ENCODE measurements at regions of chr9 and their contacts with region 1.

Region 1: GRCh38 chr9:91193658-91194391 is 167.9 kb downstream of the AUH start:
- H3K4me3 Mint-ChIP-seq: peak overlapping the region; percentile 71
- H3K27ac Mint-ChIP-seq: peak overlapping the region; percentile 100
- H3K4me1 Mint-ChIP-seq: peaks cover 82% of the 10 kb centered on the region
- H3K27me3 Mint-ChIP-seq: no peaks in the 10 kb centered on the region

Region 2: DNA sequence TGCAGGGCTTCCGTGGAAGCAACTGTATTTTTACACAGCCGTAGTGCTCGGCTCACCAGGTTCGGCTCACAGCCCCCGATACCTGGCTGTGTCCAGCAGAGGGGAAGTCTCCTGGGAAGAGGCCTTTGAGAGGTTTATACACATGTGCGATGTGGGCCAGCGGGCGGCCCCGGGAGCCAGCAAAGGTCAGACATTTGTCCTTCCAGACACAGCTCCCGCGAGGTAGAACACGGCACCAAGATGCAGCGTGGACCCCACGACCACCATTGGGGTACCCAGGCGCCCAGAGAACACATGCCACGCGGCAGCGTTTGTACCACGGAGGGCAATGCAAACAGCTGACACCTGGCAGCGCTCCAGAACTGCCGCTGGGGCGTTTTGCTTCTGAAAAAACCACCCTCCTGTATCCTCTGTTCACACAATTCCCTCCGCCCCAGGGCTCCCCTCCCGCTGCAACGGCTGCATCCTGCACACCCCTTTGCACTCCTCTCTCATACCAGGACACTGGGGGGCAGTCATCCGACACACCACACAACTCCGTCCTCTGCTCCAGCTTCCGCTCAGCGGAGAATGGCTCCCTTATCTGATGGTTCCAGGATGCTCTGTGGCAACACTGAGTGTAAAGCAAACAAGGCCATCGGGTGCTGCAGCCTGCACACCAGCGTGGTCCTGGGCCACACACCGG is 156.9 kb before region 1 on chr9:
- intact Hi-C with region 1: loop called (anchors 5 kb)
- H3K4me3 Mint-ChIP-seq: peak overlapping the region; percentile 46
- H3K27ac Mint-ChIP-seq: peak overlapping the region; percentile 52
- H3K4me1 Mint-ChIP-seq: peaks cover 53% of the 10 kb centered on the region
- H3K27me3 Mint-ChIP-seq: peaks cover 23% of the 10 kb centered on the region

Region 3: GRCh38 chr9:91150998-91151717 is 42.7 kb before region 1 on chr9:
- intact Hi-C with region 1: loop called (anchors 1 kb)
- H3K4me3 Mint-ChIP-seq: no peak overlapping the region
- H3K27ac Mint-ChIP-seq: peak overlapping the region; percentile 93
- H3K4me1 Mint-ChIP-seq: peaks cover 71% of the 10 kb centered on the region
- H3K27me3 Mint-ChIP-seq: no peaks in the 10 kb centered on the region

Region 4: DNA sequence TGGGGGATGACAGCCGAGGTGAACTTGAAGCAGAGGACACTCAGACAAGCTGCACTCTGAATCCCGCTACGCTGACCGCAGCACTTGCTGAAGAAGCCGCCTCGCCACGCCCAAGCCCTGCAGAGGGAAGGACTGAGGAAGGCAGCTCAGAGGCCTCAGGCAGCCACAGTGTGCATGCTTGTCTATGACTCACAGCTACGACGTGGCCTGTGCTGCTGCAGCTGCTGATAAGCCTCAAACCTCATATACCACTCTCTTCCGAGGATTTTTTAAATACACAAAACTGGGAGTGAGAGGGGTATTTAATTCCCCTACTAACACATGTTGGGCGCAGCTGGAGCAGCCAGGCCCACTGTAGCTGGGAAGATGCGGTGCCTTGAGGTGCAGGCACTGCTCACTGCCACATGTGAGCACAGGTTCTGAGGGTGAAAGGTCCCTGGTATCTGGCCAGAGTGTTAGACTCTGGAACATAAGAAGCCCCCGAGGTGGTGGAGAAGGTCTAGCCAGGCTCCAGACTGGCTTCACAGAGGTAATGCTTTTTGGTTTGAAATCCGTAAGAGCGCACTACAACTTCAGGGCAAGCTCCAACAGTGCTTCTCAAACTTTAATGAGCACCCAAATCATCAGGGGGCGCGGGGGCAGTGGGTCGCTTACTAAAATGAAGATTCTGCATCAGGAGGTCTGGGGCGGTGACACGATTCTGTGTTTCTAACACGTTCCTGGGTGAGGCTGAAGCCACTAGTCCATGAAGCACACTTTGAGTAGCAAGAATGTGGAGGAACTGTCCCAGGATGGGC is 28.9 kb before region 1 on chr9:
- intact Hi-C with region 1: loop called (anchors 1 kb)
- H3K4me3 Mint-ChIP-seq: peak overlapping the region; percentile 27
- H3K27ac Mint-ChIP-seq: peak overlapping the region; percentile 99
- H3K4me1 Mint-ChIP-seq: peaks cover 60% of the 10 kb centered on the region
- H3K27me3 Mint-ChIP-seq: no peaks in the 10 kb centered on the region

Region 5: GRCh38 chr9:91177661-91178280 is 16.1 kb before region 1 on chr9:
- intact Hi-C with region 1: loop called (anchors 2 kb)
- H3K4me3 Mint-ChIP-seq: no peak overlapping the region
- H3K27ac Mint-ChIP-seq: peak overlapping the region; percentile 77
- H3K4me1 Mint-ChIP-seq: peaks cover 37% of the 10 kb centered on the region
- H3K27me3 Mint-ChIP-seq: no peaks in the 10 kb centered on the region

Region 6: DNA sequence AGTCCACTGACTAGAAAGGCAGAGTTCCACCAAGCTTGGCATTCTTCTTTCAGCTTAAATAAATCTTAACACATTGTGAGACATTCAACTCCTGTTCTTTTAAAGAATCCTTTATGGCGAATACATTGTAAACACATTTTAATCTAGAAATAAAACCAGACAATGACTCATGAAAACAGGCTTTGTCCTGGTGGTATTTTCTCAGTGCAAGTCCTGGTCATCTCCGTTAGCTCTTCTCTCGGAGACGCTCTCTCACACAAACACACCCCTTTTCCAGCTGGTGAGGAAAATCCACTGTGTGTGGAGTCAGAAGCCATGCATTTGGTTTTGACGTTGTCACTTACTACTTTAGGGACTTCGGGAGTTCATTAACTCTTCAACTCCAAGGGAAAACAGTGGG is 27.5 kb after region 1 on chr9:
- intact Hi-C with region 1: no loop called
- H3K4me3 Mint-ChIP-seq: no peak overlapping the region
- H3K27ac Mint-ChIP-seq: no peak overlapping the region
- H3K4me1 Mint-ChIP-seq: peaks cover 7% of the 10 kb centered on the region
- H3K27me3 Mint-ChIP-seq: no peaks in the 10 kb centered on the region

Region 7: GRCh38 chr9:91258451-91258850 is 64.6 kb after region 1 on chr9:
- intact Hi-C with region 1: loop called (anchors 2 kb)
- H3K4me3 Mint-ChIP-seq: peak overlapping the region; percentile 48
- H3K27ac Mint-ChIP-seq: peak overlapping the region; percentile 91
- H3K4me1 Mint-ChIP-seq: peaks cover 54% of the 10 kb centered on the region
- H3K27me3 Mint-ChIP-seq: no peaks in the 10 kb centered on the region

Region 8: GRCh38 chr9:91328186-91328585 is 134.4 kb after region 1 on chr9:
- intact Hi-C with region 1: no loop called
- H3K4me3 Mint-ChIP-seq: no peak overlapping the region
- H3K27ac Mint-ChIP-seq: no peak overlapping the region
- H3K4me1 Mint-ChIP-seq: peaks cover 20% of the 10 kb centered on the region
- H3K27me3 Mint-ChIP-seq: no peaks in the 10 kb centered on the region

Region 9: GRCh38 chr9:91346652-91347051 is 152.8 kb after region 1 on chr9:
- intact Hi-C with region 1: loop called (anchors 1 kb)
- H3K4me3 Mint-ChIP-seq: no peak overlapping the region
- H3K27ac Mint-ChIP-seq: peak overlapping the region; percentile 57
- H3K4me1 Mint-ChIP-seq: peaks cover 46% of the 10 kb centered on the region
- H3K27me3 Mint-ChIP-seq: no peaks in the 10 kb centered on the region